SK-N-SH (cell line): ENCODE measurements at regions of chr3 and their contacts with region 1.

Region 1: DNA sequence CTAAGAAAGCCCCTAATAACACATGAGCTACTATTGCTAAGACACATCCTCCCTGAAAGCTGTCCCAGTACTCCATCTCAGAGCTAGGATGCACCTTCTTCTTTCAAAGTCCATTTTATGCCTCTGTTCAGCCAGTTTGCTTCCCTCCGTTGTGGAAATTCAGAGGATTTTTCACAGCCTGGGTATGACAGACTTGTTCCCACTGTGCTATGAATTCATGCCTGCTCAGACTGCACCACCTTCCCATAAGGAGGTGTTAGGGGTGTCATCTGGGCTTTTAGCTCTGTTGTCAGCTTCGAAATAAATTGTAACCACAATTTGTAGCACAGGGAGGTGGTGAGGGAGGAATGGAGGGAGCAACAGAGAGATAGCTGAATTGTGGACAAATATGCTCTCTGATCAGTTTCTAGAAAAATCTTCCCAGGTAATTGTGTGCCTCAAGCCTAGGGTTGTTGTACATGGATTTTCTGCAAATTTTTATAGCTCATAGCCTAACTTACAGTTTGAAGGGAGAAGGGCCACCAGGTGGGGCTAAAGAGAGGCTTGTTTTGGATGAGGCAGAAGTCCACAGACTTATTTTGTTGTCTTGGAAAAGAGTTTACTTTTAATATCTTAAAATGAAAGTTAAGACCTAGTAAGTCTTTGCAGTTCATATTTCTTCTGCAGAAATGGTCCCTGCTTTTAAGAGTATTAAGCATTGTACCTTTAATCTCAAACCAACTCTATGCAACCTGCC is 462.0 kb downstream of the PDCD6IP start:
- DNase-seq: peak; percentile 47
- H3K4me3 ChIP-seq: peak overlapping the region in 1 of 2 experiments; percentile 5; a peak in 1 of 4 replicates
- H3K27ac ChIP-seq: peak overlapping the region in 1 of 2 experiments; percentile 94; a peak in 2 of 4 replicates
- H3K4me1 ChIP-seq: peaks cover 32 to 42% of the 10 kb centered on the region in 2 experiments; a peak in 3 of 4 replicates
- H3K27me3 ChIP-seq: no peaks in the 10 kb centered on the region
- CTCF ChIP-seq: peak; percentile 62
- EP300 ChIP-seq: no peak
- RAD21 ChIP-seq: peak; percentile 70

Region 2: DNA sequence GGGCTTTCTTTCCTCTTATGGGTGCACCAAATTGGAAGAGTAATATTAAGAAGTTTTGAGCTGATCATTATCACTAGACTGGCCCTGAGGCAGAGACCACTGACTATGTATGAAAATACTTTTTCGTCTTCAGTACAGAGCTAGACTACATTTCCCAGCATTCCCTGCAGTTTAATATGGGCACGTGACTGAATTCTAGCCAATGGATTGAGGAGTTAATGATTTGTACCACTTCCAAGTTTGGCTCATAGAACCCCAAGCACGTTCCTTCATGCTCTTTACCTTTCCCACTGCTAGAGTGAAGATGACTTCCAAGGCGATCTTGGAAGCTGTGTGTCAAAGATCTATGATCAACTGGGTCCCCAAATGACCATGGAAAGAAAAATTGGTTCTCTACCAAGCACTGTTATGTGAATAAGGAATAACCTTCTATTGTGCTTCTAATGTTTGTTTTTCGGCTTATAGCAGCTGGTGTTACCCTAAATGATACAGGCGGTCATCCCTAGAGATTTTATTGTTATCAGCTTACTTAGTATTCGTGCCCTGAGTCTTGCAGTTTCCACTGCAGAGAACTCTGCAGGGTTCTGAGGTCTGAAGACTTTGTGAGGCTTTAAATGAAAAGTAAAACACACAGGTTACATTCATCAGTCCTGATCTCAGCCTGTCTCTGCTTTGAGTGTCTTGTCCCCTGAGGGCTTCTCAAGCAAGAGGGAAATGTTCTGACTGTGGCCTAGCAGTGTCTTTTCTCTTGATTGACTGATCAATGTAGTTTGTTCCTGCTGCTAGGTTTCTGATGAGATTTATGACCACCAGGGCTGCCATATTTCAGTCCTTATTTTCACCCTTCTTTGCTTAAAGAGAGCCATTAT is 24.8 kb after region 1 on chr3:
- CTCF ChIA-PET with region 1: interaction called, 19 read pairs
- POLR2A ChIA-PET with region 1: no interaction called
- DNase-seq: no peak
- H3K4me3 ChIP-seq: no peak overlapping the region
- H3K27ac ChIP-seq: peak overlapping the region in 1 of 2 experiments; percentile 58; a peak in 1 of 4 replicates
- H3K4me1 ChIP-seq: peaks cover 0 to 12% of the 10 kb centered on the region in 2 experiments; a peak in 3 of 4 replicates
- H3K27me3 ChIP-seq: no peaks in the 10 kb centered on the region
- CTCF ChIP-seq: no peak
- EP300 ChIP-seq: no peak
- RAD21 ChIP-seq: no peak

Region 3: DNA sequence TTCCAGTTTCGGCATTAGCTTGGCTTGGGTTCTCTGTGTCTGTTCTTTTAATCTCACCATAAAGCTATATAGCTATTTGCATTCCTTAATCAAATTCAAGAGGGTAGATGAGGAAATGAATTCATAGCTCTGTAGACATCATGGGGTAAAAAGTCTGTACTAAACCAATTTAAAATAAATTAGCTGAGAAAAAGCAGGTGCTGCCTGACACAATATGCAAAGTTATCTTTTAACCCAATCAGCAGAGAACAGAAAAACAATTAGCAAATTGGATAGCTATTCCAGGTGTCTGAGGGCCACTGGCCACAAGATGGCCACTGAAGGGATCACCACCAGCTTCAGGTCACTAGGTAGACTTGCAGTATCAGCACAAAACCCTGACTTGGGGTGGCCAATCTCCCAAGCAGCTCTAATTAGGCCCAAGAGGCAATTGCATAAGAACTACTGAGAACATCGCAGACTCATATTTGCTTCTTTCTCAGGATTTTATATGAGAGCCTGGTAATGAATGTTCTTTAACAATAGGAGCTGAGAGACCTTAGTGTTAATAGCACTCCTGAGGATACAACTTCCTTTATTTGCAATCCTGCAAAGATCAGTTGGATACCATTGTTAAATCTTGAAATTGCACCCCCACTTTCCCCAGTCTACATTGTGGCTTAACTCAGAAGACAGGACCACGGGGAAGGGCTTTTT is 32.3 kb after region 1 on chr3:
- CTCF ChIA-PET with region 1: interaction called, 15 read pairs
- POLR2A ChIA-PET with region 1: no interaction called
- DNase-seq: peak; percentile 3
- H3K4me3 ChIP-seq: no peak overlapping the region
- H3K27ac ChIP-seq: peak overlapping the region in 1 of 2 experiments; percentile 81; a peak in 2 of 4 replicates
- H3K4me1 ChIP-seq: peaks cover 8 to 21% of the 10 kb centered on the region in 2 experiments; a peak in 3 of 4 replicates
- H3K27me3 ChIP-seq: no peaks in the 10 kb centered on the region
- CTCF ChIP-seq: no peak
- EP300 ChIP-seq: peak in 1 of 2 experiments; percentile 71; a peak in 1 of 4 replicates
- RAD21 ChIP-seq: no peak; the same call in 1 of the 2 replicates

Region 4: DNA sequence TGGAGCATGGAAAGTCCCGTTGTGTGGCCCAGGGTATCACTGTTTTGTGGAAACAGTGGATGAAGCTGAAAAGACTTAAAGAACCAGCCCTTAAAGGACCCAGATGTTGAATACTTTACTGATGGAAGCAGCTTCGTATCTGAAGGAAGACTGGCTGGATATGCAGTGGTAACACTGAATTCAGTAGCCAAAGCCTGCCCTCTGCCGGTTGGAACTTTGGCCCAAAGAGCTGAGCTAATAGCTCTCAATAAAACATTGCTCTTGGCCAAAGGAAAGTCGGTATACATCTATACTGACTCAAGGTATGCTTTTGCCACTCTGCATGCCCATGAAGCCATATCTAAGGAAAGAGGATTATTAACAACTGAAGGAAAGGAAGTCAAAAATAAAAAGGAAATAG is 423.4 kb after region 1 on chr3:
- CTCF ChIA-PET with region 1: interaction called, 43 read pairs
- POLR2A ChIA-PET with region 1: no interaction called
- DNase-seq: peak; percentile 4
- H3K4me3 ChIP-seq: no peak overlapping the region
- H3K27ac ChIP-seq: no peak overlapping the region; a peak in 1 of 4 replicates
- H3K4me1 ChIP-seq: no peaks in the 10 kb centered on the region
- H3K27me3 ChIP-seq: no peaks in the 10 kb centered on the region
- CTCF ChIP-seq: peak; percentile 30
- EP300 ChIP-seq: no peak
- RAD21 ChIP-seq: peak; percentile 79